Cardiac septum (tissue), 1 donor: ENCODE measurements at regions of chr11 and their contacts with region 1.

Region 1: DNA sequence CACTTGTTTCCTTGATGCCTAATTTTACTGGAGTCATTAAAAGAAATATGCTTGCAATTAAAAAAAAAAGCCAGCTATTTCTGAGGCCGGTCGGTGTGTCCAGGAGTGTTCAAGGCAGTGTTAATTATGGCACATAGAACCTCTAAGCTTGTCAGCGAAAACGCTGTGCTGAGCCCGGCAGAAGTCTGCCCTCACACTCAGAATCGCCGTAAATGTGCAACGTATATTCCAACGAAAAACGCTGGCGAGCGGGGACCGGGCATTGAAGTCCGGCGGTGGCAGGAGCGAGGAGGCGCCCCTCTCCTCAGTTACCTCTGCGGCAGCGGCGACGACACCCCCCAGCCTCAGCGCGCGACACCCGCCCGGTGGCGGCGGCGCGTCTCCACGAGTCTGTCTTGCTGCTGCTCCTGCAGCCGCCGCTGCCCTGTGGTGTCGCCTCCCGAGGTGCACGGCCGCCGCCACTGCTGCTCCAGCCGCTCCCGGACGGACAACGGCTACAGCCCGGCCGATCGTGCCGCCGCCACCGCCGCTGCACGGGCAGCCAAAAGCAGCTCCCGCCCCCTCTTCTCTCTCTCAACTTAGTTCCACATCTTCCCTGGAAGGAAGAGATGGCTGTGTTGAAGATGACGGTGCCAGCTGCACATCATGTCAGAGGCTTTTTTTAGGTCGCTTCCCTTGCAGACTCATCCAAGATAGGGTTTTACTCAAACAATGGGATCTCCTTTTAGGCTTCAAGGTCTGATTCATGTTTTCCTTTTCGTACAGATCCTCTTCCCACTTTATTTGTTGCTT is 56.0 kb downstream of the JAM3 start:
- DNase-seq: no peak

Region 2: GRCh38 chr11:133927690-133928627 is 196.9 kb before region 1 on chr11:
- intact Hi-C with region 1: loop called (anchors 5 kb)
- DNase-seq: peak; percentile 85

Region 3: GRCh38 chr11:133947321-133947756 is 177.5 kb before region 1 on chr11:
- intact Hi-C with region 1: loop called (anchors 5 kb)
- DNase-seq: no peak

Region 4: GRCh38 chr11:133977067-133977677 is 147.7 kb before region 1 on chr11:
- intact Hi-C with region 1: no loop called
- DNase-seq: no peak

Region 5: DNA sequence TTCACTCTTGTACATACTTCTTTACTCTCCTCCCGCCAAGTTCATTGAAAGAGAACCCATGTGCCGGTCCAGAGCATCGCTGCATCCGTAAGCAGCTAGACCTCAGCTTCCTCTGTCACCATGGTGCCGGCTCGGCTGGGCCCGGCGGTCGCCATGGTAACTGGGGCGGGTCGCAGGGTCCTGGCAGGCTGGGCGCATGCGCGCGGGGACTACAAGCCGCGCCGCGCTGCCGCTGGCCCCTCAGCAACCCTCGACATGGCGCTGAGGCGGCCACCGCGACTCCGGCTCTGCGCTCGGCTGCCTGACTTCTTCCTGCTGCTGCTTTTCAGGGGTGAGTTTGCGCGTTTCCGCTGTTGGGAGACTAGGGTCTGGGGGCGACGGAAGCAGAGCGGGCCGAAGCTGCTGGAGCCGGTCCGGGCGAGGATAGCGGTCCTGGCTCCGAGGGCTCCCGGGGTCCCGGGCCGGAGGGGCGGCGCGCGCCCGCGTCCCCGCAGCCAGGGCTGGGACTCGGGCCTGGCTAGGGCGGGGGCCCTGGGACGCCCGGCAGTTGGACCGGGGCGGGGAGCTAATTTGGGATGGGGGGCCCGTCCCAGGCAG is 55.9 kb before region 1 on chr11 and contains the start of gene JAM3:
- intact Hi-C with region 1: loop called (anchors 2 kb)
- DNase-seq: peak; percentile 97
- total RNA-seq, gene JAM3: 46.5 TPM

Region 6: DNA sequence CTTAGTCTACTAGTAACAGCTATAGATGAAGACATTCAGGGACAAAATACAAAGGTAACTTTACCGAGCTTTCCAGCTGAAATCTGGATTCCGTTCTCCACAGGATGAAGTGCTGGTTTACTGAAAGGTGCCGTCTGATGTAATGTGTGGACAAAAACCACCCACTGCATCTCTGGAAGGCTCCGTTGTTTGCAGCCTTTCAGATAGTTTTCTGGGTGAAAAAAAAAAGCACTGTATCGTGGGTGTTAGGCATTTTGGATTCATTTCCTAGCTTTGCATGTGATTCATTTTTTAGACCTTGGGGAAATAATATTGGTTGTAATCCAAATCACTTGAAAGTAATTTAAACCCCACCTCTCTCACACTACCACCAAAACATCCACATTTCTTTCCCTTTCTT is 45.5 kb before region 1 on chr11:
- intact Hi-C with region 1: no loop called
- DNase-seq: no peak